ENCODE measurements at regions of chr10 and their contacts with region 1.

Region 1: DNA sequence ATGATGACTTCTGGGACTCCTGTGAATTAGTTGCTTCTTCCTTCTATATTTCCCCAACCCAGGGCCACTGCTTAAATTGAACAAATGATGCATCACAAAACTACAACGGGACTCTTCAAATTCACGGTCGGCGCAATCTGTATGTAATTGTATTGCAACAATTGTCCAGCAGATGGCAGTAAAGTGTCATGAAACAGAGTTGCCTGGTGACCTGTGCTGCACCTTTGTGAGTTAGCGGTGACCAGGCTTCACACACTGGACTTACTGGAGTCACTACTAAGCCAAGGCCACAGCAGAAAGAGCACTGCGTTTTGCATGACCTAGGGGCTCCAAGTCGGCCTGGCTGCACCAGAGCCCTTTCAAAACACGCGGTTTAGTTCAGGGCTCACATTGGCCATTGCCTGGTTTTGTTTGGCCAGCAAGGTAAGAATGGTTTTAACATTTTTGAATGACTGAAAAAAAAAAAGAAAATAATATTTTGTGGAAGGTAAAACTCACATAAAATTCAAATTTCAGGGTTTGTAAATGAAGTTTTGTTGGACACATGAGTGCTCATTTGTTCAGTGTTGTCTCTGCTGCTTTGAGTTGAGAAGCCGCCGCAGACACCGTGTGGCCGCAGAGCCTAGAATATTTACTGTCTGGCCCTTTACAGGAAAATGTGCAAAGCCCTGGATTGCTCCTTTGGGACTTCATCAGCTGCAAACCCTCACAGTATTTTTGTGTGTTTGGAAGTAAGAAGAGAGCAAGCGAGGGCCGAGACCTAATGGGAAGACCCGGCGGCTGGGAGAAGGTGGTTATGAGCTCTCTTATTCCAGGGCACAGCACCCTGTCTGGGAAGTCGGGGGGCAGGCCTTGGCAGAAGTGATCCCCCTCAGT is 23.2 kb upstream of the ZNF32 start:
- DNase-seq: peak; percentile 63
- H3K4me3 ChIP-seq: no peak overlapping the region
- H3K27ac ChIP-seq: no peak overlapping the region
- H3K4me1 ChIP-seq: no peaks in the 10 kb centered on the region
- H3K27me3 ChIP-seq: peaks cover 2% of the 10 kb centered on the region
- CTCF ChIP-seq: peak; percentile 54 to 90 (median 81)
- POLR2A ChIP-seq: no peak

Region 2: DNA sequence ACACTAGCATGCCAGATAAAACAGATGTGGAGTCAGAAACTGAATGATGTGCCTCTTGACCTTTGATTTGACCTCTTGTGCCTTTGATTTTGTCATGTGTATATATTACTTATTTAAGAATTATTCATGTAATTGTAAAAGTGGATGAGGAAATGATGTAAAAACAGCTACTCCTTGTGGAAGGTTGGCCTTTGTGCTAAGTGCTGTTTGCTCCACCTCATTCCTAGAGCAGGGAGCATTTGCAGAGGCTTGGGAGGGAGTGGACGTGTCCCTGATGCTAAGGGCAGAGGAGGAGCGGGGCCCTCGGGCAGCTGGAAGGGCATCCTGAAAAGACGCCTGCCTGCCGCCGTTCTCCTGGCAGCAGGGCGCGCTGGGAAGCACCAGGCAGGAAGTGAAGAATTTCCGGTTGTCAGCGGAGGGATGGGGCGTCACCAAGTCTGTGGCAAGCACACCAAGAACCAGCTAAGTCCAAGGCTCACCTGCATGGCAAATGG is 174.3 kb after region 1 on chr10:
- intact Hi-C with region 1: no loop called
- DNase-seq: no peak
- H3K4me3 ChIP-seq: no peak overlapping the region
- H3K27ac ChIP-seq: no peak overlapping the region
- H3K4me1 ChIP-seq: no peaks in the 10 kb centered on the region
- H3K27me3 ChIP-seq: no peaks in the 10 kb centered on the region
- CTCF ChIP-seq: no peak
- POLR2A ChIP-seq: no peak

Region 3: GRCh38 chr10:44310762-44311562 is 639.1 kb after region 1 on chr10:
- intact Hi-C with region 1: loop called (anchors 5 kb)
- DNase-seq: peak; percentile 62
- H3K4me3 ChIP-seq: peak overlapping the region in 1 of 2 donors; percentile 15
- H3K27ac ChIP-seq: no peak overlapping the region
- H3K4me1 ChIP-seq: peaks cover 2% of the 10 kb centered on the region
- H3K27me3 ChIP-seq: no peaks in the 10 kb centered on the region
- CTCF ChIP-seq: peak; percentile 66 to 93 (median 88)
- POLR2A ChIP-seq: no peak

Region 4: GRCh38 chr10:44864637-44865288 is 1192.9 kb after region 1 on chr10:
- intact Hi-C with region 1: loop called (anchors 5 kb)
- DNase-seq: peak; percentile 84
- H3K4me3 ChIP-seq: peak overlapping the region; percentile 33 to 34
- H3K27ac ChIP-seq: peak overlapping the region; percentile 62 to 70
- H3K4me1 ChIP-seq: no peaks in the 10 kb centered on the region
- H3K27me3 ChIP-seq: no peaks in the 10 kb centered on the region
- CTCF ChIP-seq: peak; percentile 94 to 98 (median 97)
- POLR2A ChIP-seq: no peak

Measured in prostate gland (tissue), 2 donors.